ENCODE measurements at regions of chr6 and their contacts with region 1.

Region 1: GRCh38 chr6:152863618-152864326 is 113.2 kb downstream of the VIP start:
- DNase-seq: peak; percentile 78
- H3K4me3 ChIP-seq: no peak overlapping the region
- H3K27ac ChIP-seq: no peak overlapping the region
- H3K4me1 ChIP-seq: no peaks in the 10 kb centered on the region
- H3K27me3 ChIP-seq: no peaks in the 10 kb centered on the region
- CTCF ChIP-seq: peak; percentile 48 to 54
- POLR2A ChIP-seq: no peak

Region 2: DNA sequence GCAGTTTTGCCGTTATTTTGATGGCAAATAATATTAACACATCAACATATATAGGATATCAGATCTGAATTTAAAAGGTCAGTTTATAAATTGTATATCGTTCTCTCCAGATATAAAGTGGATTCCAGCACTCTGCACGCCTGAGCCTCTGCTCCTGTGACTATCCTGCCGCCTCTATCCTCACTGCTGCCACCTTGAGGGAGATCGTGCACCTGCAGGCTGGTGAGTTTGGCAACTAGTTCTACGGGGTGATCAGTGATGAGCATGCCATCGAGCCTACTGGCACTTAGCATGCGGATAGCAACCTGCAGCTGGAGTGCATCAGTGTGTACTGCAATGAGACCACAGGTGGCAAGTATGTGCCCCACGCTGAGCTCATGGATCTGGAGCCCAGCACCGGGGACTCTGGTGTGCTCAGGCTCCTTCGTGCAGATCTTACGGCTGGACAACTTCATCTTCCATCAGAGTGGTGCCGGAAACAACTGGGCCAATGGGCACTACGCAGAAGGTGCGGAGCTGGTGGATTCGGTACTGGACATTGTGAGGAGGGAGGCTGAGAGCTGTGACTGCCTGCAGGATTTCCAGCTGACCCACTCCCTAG is 34.1 kb after region 1 on chr6:
- CTCF ChIA-PET with region 1: interaction called, 7 read pairs
- POLR2A ChIA-PET with region 1: no interaction called
- dilution Hi-C with region 1: no loop called
- intact Hi-C with region 1: loop called (anchors 2 kb)
- DNase-seq: peak; percentile 65
- H3K4me3 ChIP-seq: no peak overlapping the region
- H3K27ac ChIP-seq: no peak overlapping the region
- H3K4me1 ChIP-seq: no peaks in the 10 kb centered on the region
- H3K27me3 ChIP-seq: peaks cover 0 to 2% of the 10 kb centered on the region in 2 experiments
- CTCF ChIP-seq: peak; percentile 84 to 88
- POLR2A ChIP-seq: no peak

Measured in endothelial cell of umbilical vein (primary cell).